PC-3 (cell line): ENCODE measurements at regions of chr1 and their contacts with region 1.

Region 1: GRCh38 chr1:110390692-110391245 is at the start of gene SLC16A4:
- DNase-seq: no peak
- ATAC-seq: no peak
- H3K4me3 ChIP-seq: no peak within 1 kb of the TSS
- H3K27ac ChIP-seq: no peak within 1 kb of the TSS
- H3K4me1 ChIP-seq: peaks cover 26% of the 10 kb centered on the region
- H3K27me3 ChIP-seq: no peaks in the 10 kb centered on the region
- CTCF ChIP-seq: no peak
- total RNA-seq, gene SLC16A4: 0.22 and 0.29 TPM in 2 replicates

Region 2: GRCh38 chr1:110130113-110130596 is 260.6 kb before region 1 on chr1:
- CTCF ChIA-PET with region 1: interaction called, 11 read pairs
- POLR2A ChIA-PET with region 1: no interaction called
- intact Hi-C with region 1: no loop called
- DNase-seq: no peak
- ATAC-seq: no peak
- H3K4me3 ChIP-seq: no peak overlapping the region
- H3K27ac ChIP-seq: no peak overlapping the region
- H3K4me1 ChIP-seq: no peaks in the 10 kb centered on the region
- H3K27me3 ChIP-seq: peaks cover 20% of the 10 kb centered on the region; the same call in 1 of the 2 replicates
- CTCF ChIP-seq: no peak

Region 3: DNA sequence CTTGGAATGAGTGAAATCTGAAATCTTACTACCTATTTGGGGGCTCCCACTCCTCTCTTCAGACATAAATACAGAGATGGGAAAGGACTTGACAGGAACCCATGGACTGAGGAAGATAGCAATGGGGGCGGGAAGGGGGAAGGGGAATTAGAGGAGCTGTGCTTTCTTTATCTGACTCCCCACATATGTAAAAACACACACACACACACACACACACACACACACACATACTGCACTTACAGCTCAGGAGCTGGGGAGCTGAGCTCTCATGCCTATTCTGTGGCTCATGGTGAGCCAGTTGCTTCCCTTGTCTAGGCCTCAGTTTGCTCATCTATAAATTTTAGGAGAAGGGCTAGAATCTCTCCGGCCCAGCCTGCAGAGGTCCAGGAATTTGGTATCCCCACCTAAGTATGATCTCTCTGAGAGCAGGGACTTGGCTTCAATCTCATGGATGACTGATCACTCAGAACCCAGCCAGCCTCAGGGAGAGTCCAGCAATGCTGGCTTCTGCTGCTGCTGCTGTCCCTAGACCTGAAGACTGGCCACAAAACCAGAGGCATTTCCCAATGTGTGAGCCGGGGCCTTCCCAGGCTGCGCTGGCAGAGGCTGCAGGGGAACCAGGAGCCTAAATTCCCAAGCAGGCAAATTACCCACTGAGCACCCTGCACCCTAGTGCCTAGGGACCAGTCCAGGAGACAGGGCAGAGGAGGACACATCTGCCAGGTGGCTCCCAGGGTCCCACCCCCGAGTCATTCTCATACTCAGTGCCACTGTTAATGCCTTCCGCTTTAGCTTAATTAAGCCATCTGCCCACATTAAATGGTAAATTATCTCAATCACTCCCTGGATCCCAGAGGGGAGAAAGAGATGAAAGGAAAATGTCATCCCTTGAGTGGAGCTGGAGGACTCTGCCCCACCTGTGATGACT is 109.1 kb before region 1 on chr1:
- CTCF ChIA-PET with region 1: no interaction called
- POLR2A ChIA-PET with region 1: no interaction called
- intact Hi-C with region 1: no loop called
- DNase-seq: no peak
- ATAC-seq: no peak
- H3K4me3 ChIP-seq: no peak overlapping the region
- H3K27ac ChIP-seq: no peak overlapping the region
- H3K4me1 ChIP-seq: no peaks in the 10 kb centered on the region
- H3K27me3 ChIP-seq: peaks cover 23% of the 10 kb centered on the region
- CTCF ChIP-seq: no peak

Region 4: GRCh38 chr1:110338886-110339406 is 51.8 kb before region 1 on chr1 and contains the start of gene RBM15:
- CTCF ChIA-PET with region 1: no interaction called
- POLR2A ChIA-PET with region 1: no interaction called
- intact Hi-C with region 1: loop called (anchors 5 kb)
- DNase-seq: peak; percentile 100
- ATAC-seq: peak; percentile 76
- H3K4me3 ChIP-seq: peak within 1 kb of the TSS; percentile 92
- H3K27ac ChIP-seq: peak within 1 kb of the TSS; percentile 95
- H3K4me1 ChIP-seq: peaks cover 41% of the 10 kb centered on the region
- H3K27me3 ChIP-seq: no peaks in the 10 kb centered on the region
- CTCF ChIP-seq: no peak
- total RNA-seq, gene RBM15: 41.3 and 47.0 TPM in 2 replicates

Region 5: GRCh38 chr1:110356405-110356804 is 34.4 kb before region 1 on chr1:
- CTCF ChIA-PET with region 1: no interaction called
- POLR2A ChIA-PET with region 1: no interaction called
- intact Hi-C with region 1: loop called (anchors 5 kb)
- DNase-seq: peak; percentile 93
- ATAC-seq: peak; percentile 95
- H3K4me3 ChIP-seq: no peak overlapping the region; the same call in 1 of the 2 replicates
- H3K27ac ChIP-seq: no peak overlapping the region
- H3K4me1 ChIP-seq: peaks cover 23% of the 10 kb centered on the region
- H3K27me3 ChIP-seq: no peaks in the 10 kb centered on the region
- CTCF ChIP-seq: no peak